ENCODE measurements at regions of chr19 and their contacts with region 1.

Region 1: DNA sequence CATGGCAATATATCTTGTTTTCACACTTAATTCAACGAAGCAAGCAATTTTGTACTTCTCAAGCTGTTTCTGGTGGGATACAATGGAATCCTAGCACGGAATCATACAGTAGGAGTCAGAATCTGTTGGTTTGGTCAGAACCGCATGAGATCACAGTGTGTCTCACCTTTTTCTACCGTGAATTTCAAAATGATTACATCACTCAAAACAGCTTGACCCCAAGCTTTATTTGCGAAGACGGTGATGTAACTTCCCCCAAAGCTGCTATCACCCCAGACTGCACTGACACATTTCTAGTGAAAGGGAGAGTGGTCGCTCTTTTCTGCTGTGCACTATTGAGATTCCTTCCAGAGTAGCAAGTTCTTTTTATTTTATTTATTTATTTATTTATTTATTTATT is 9.6 kb downstream of the C19orf18 start:
- DNase-seq: no peak
- ATAC-seq: no peak
- H3K4me3 ChIP-seq: no peak overlapping the region
- H3K27ac ChIP-seq: no peak overlapping the region
- H3K4me1 ChIP-seq: no peaks in the 10 kb centered on the region
- H3K27me3 ChIP-seq: no peaks in the 10 kb centered on the region
- CTCF ChIP-seq: no peak
- POLR2A ChIP-seq: no peak

Region 2: DNA sequence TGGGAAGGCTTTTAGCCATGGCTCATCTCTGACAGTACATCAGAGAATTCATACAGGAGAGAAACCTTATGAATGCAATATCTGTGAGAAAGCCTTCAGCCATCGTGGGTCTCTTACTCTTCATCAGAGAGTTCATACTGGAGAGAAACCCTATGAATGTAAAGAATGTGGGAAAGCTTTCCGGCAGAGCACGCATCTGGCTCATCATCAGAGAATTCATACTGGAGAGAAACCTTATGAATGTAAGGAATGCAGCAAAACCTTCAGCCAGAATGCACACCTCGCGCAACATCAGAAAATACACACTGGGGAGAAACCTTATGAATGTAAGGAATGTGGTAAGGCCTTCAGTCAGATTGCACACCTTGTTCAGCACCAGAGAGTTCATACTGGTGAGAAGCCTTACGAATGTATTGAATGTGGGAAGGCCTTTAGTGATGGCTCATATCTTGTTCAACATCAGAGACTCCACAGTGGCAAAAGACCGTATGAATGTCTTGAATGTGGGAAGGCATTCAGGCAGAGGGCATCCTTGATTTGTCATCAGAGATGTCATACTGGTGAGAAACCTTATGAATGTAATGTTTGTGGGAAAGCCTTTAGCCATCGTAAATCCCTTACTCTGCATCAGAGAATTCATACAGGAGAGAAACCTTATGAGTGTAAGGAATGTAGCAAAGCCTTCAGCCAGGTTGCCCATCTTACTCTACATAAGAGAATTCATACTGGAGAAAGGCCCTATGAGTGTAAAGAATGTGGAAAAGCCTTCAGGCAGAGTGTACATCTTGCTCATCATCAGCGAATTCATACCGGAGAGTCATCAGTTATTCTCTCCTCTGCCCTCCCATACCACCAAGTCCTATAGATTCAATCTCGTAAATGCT is 1386.8 kb before region 1 on chr19:
- intact Hi-C with region 1: loop called in 1 of 10 experiments (anchors 10 kb)
- DNase-seq: no peak
- ATAC-seq: no peak
- H3K4me3 ChIP-seq: no peak overlapping the region
- H3K27ac ChIP-seq: no peak overlapping the region
- H3K4me1 ChIP-seq: no peaks in the 10 kb centered on the region
- H3K27me3 ChIP-seq: no peaks in the 10 kb centered on the region
- CTCF ChIP-seq: no peak
- POLR2A ChIP-seq: no peak

Region 3: GRCh38 chr19:57888560-57889231 is 76.1 kb before region 1 on chr19 and contains the start of gene ZNF814:
- intact Hi-C with region 1: no loop called
- DNase-seq: peak; percentile 86 to 90 (median 88)
- ATAC-seq: peak; percentile 91 to 96 (median 94)
- H3K4me3 ChIP-seq: peak within 1 kb of the TSS; percentile 25 to 91 (median 78)
- H3K27ac ChIP-seq: peak within 1 kb of the TSS in 11 of 12 donors; percentile 56 to 84 (median 77)
- H3K4me1 ChIP-seq: peaks cover 0 to 22% (median 11%) of the 10 kb centered on the region in 12 donors
- H3K27me3 ChIP-seq: no peaks in the 10 kb centered on the region
- CTCF ChIP-seq: peak; percentile 24 to 77 (median 49)
- POLR2A ChIP-seq: peak in 1 of 2 donors; percentile 25
- total RNA-seq, gene ZNF814: 8.7 to 16.4 (median 10.5) TPM